HepG2 (cell line): ENCODE measurements at regions of chr6 and their contacts with region 1.

Region 1: DNA sequence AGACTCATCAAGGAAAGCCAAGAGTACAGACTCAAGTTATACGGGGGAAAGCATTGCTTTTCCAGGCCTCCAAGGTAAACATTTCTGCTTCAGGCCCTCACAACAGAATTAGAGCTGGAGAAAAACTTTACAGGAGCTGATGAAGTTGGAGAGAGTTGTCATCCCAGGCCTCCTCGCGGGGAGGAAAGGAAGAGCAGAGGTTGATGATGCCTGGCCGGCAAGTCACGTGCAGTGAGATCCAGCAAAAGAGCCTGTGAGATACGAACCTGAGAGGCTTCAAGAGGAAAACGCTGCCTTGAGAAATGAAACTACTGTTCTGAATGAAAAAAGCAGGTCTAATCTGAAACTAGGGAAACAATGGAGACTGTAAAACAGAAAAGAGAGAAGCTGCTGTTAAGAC is 122.9 kb downstream of the FAM120B start:
- DNase-seq: peak; percentile 24
- ATAC-seq: peak; percentile 60
- H3K4me3 ChIP-seq: no peak overlapping the region
- H3K27ac ChIP-seq: no peak overlapping the region
- H3K4me1 ChIP-seq: peaks cover 18% of the 10 kb centered on the region
- H3K27me3 ChIP-seq: peaks cover 2 to 34% of the 10 kb centered on the region in 2 experiments; a peak in 3 of 5 replicates
- CTCF ChIP-seq: peak; percentile 39
- EP300 ChIP-seq: no peak
- POLR2A ChIP-seq: no peak
- RAD21 ChIP-seq: no peak

Region 2: DNA sequence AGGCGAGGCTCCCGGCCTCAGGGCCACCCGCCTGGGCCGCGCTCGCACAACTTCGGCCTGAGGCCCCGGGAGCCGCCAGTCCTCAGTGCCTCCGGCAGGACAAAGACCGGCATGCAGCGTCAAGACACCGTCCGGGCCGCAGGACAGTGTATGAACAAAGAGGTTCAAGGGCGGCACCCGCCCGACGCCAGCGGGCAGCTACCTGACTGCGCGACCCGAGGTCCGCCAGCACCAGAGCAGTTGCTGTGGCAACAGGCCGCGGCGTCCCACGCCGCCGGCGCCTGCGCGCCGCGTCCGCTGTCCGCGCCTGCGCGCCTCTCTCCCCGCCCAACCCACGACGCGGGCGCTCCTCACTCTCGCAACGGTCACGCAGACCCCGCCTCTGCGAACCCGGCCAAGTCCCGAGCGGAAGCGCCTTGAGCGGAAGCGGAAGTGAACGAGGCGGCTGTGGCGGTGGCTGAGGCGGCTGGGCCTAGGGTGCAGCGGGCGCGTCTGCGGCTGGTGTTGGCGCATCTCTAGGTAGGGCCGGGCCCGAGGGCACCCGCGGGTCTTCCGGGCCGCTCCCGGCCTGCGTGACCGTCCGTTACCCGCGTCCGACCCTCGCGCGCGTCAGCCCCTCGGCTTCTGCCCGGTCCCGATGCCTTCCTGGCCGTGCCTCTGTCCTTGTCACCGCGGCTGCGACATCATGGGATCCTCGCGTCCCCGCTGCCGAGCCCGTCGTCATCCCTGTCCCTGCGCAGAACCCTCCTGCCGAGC is 122.9 kb before region 1 on chr6 and contains the start of gene FAM120B:
- CTCF ChIA-PET with region 1: no interaction called
- POLR2A ChIA-PET with region 1: no interaction called
- in situ Hi-C with region 1: no loop called
- intact Hi-C with region 1: loop called (anchors 10 kb)
- DNase-seq: peak; percentile 94
- ATAC-seq: peak; percentile 97
- H3K4me3 ChIP-seq: peak within 1 kb of the TSS; percentile 78 to 98 (median 92)
- H3K27ac ChIP-seq: peak within 1 kb of the TSS; percentile 67
- H3K4me1 ChIP-seq: peaks cover 28% of the 10 kb centered on the region
- H3K27me3 ChIP-seq: no peaks in the 10 kb centered on the region; a peak in 1 of 5 replicates
- CTCF ChIP-seq: peak; percentile 24; the same call in 1 of the 2 replicates
- EP300 ChIP-seq: 0 out of 4 replicates have a peak, but pooled peaks of 1 of the 2 experiments have one; percentile 10
- POLR2A ChIP-seq: peak; percentile 97 to 99
- RAD21 ChIP-seq: peak; percentile 63
- total RNA-seq, gene FAM120B: 10.7 and 18.3 TPM in 2 replicates